ENCODE measurements at regions of chr2 and their contacts with region 1.

Region 1: GRCh38 chr2:117470311-117471095 is 344.0 kb upstream of the DDX18 start:
- DNase-seq: peak; percentile 17
- ATAC-seq: no peak
- H3K4me3 ChIP-seq: no peak overlapping the region
- H3K27ac ChIP-seq: no peak overlapping the region
- H3K4me1 ChIP-seq: no peaks in the 10 kb centered on the region
- H3K27me3 ChIP-seq: no peaks in the 10 kb centered on the region
- CTCF ChIP-seq: peak; percentile 54

Region 2: GRCh38 chr2:117436697-117437096 is 33.8 kb before region 1 on chr2:
- CTCF ChIA-PET with region 1: no interaction called
- POLR2A ChIA-PET with region 1: no interaction called
- in situ Hi-C with region 1: no loop called
- intact Hi-C with region 1: no loop called
- DNase-seq: no peak
- ATAC-seq: no peak
- H3K4me3 ChIP-seq: no peak overlapping the region
- H3K27ac ChIP-seq: no peak overlapping the region
- H3K4me1 ChIP-seq: no peaks in the 10 kb centered on the region
- H3K27me3 ChIP-seq: no peaks in the 10 kb centered on the region
- CTCF ChIP-seq: no peak

Region 3: DNA sequence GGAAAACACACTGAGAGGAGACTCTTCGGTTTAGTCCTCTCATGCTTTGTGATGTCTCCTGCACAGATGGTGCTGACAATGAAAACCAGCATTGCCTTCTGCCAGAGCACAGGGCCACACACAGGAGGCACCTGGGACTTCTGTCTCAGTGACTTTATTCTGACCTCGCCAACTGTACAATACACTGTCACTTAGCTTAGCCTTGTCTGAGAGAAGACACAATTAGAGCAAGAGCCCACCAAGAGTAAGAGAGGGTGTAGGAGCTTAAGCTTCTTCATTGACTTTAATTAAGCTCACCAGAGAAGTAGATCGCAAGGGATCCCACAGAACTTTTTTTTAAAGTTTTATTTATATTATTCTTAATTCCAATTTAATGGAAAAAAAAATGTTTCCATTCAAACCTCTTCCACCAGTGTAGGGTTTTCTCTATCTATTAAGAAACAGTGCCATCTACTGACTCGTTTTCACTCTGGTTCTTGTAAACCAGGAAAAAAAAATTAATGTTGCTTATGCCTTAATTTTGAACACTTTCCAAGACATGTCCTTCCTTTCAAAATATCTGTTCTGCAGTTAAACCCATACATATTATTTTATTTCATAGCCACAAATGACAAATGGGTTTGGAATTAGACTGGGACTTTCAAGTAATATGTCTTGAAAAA is 301.6 kb after region 1 on chr2:
- CTCF ChIA-PET with region 1: no interaction called
- POLR2A ChIA-PET with region 1: no interaction called
- in situ Hi-C with region 1: no loop called
- intact Hi-C with region 1: loop called (anchors 5 kb)
- DNase-seq: no peak
- ATAC-seq: no peak
- H3K4me3 ChIP-seq: no peak overlapping the region
- H3K27ac ChIP-seq: no peak overlapping the region
- H3K4me1 ChIP-seq: no peaks in the 10 kb centered on the region
- H3K27me3 ChIP-seq: no peaks in the 10 kb centered on the region
- CTCF ChIP-seq: peak; percentile 58; the same call in 1 of the 2 replicates

Region 4: GRCh38 chr2:117785740-117786139 is 315.2 kb after region 1 on chr2:
- CTCF ChIA-PET with region 1: no interaction called
- POLR2A ChIA-PET with region 1: no interaction called
- in situ Hi-C with region 1: no loop called
- intact Hi-C with region 1: loop called (anchors 5 kb)
- DNase-seq: no peak
- ATAC-seq: no peak
- H3K4me3 ChIP-seq: no peak overlapping the region
- H3K27ac ChIP-seq: no peak overlapping the region
- H3K4me1 ChIP-seq: no peaks in the 10 kb centered on the region
- H3K27me3 ChIP-seq: no peaks in the 10 kb centered on the region
- CTCF ChIP-seq: peak; percentile 74; the same call in 1 of the 2 replicates

Measured in Panc1 (cell line).